ENCODE measurements at regions of chr20 and their contacts with region 1.

Region 1: GRCh38 chr20:34709831-34710567 is 5.9 kb downstream of the TP53INP2 start:
- DNase-seq: peak; percentile 64
- H3K4me3 ChIP-seq: peak overlapping the region; percentile 59 to 67
- H3K27ac ChIP-seq: peak overlapping the region; percentile 89 to 99
- H3K4me1 ChIP-seq: peaks cover 5% of the 10 kb centered on the region
- H3K27me3 ChIP-seq: no peaks in the 10 kb centered on the region
- CTCF ChIP-seq: peak in 2 of 4 experiments; percentile 35 to 39
- POLR2A ChIP-seq: no peak

Region 2: GRCh38 chr20:34579191-34579978 is 130.6 kb before region 1 on chr20:
- intact Hi-C with region 1: loop called (anchors 2 kb)
- DNase-seq: peak; percentile 76
- H3K4me3 ChIP-seq: no peak overlapping the region
- H3K27ac ChIP-seq: no peak overlapping the region
- H3K4me1 ChIP-seq: no peaks in the 10 kb centered on the region
- H3K27me3 ChIP-seq: no peaks in the 10 kb centered on the region
- CTCF ChIP-seq: peak in 3 of 4 experiments; percentile 51 to 87 (median 86)
- POLR2A ChIP-seq: no peak

Region 3: GRCh38 chr20:34768096-34768495 is 58.1 kb after region 1 on chr20:
- intact Hi-C with region 1: no loop called
- DNase-seq: no peak
- H3K4me3 ChIP-seq: no peak overlapping the region
- H3K27ac ChIP-seq: no peak overlapping the region
- H3K4me1 ChIP-seq: no peaks in the 10 kb centered on the region
- H3K27me3 ChIP-seq: no peaks in the 10 kb centered on the region
- CTCF ChIP-seq: no peak
- POLR2A ChIP-seq: no peak

Region 4: DNA sequence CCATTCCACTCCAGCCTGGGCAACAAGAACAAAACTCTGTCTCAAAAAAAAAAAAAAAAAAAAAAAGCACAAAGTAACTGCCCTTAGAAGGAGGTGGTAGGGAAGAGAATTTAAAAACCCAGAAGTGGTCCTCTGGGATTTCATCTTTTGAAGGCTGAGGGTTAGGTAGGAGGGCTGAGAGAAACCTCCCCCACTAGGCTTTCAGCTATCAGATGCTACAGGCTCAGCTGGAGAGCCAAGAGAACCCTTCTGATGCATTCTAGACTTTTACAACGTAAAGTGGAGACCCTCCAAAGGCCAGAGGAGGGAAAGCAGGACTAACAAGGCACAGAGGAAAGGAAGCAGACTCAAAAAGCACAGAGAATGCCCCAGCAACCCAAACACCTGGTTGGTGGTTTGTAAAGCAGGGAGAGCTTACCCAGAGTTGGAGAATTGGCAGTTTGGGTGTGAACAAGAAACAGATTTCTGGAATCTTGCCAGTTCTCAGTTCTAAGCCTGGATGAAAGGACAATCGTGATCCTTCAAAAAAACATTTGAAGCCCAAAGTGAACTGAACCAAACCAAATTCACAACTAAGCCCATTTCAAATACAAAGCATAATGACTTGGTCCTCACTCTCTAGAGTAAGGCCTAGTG is 882.5 kb after region 1 on chr20:
- intact Hi-C with region 1: no loop called
- DNase-seq: no peak
- H3K4me3 ChIP-seq: no peak overlapping the region
- H3K27ac ChIP-seq: no peak overlapping the region
- H3K4me1 ChIP-seq: no peaks in the 10 kb centered on the region
- H3K27me3 ChIP-seq: no peaks in the 10 kb centered on the region
- CTCF ChIP-seq: no peak
- POLR2A ChIP-seq: no peak